Psoas muscle (tissue), 8 donors: ENCODE measurements at regions of chr1 and their contacts with region 1.

Region 1: DNA sequence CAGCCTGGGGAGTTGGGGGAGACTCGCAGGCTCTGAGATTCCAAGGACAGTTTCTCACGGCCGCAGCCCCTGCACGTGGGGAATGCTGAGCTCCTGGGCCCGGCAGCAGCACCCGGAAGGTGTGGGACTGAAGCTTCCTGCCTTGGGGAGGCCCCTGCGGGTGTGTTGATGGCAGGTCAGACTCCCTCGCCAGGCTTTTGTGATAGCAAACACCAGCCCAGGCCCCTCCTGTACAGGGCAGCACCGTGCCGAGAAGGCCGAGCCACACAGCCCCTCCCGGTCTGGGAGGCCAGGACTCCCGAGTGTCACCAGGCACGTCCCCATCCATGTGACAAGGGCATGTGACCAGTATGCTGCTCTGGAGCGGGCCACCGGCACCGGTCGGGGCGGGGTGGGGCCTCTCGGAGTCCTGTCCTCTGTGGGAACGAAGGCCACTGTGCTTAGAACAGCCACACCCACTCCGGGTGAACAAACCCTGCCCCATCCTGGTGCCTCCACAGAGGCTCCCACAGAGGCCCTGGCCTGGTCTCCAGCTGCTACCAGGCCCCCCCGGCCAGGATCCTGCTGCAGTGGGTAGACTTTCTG is 31.1 kb upstream of the ARHGEF16 start:
- DNase-seq: peak; percentile 33 to 64
- ATAC-seq: peak; percentile 38 to 62 (median 51)
- H3K4me3 ChIP-seq: no peak overlapping the region
- H3K27ac ChIP-seq: peak overlapping the region; percentile 55
- H3K4me1 ChIP-seq: no peaks in the 10 kb centered on the region
- H3K27me3 ChIP-seq: peaks cover 0 to 18% (median 4%) of the 10 kb centered on the region in 3 donors
- CTCF ChIP-seq: no peak

Region 2: DNA sequence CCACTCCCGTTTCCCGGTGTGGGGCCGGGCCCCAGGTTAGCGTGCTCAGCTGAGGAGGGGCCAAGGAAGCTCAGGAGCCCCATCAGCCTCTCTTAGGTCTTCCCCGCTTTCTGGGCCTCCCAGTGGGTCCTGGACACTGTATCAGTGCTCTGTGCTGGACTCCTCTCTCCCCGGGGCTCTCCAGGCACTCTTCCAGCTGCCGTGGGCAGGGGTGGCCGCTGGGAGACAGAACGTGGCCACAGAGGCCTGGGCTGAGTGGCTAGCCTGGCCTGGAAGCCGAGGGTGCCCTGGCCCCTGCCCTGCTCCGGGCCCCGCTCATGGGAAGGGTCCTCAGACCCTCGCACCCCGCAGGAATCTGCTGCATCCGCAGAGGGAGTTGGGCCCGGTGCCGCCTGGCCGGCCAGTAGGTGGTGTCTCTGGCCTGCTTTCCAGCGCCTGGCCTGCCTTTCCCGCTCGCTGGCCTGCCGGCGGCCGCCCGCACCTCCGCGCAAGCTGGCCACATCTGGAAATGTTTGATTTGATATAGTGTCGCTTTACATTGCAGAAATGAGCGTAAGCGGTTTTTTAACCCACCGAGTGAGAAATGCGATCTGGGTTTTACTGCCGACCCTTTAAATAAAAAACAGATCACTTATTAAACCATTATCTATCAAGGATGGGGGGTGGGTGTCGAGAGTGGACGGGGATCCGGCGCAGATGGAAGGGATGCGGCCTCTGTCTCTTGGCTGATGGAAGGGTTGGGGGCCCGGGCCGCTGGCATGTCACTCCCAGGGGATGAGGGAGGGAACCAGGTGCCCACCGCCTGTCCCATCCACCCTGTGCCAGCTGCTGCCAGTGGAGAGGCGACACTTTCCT is 547.4 kb before region 1 on chr1:
- intact Hi-C with region 1: loop called in 1 of 2 experiments (anchors 10 kb)
- DNase-seq: no peak
- ATAC-seq: no peak
- H3K4me3 ChIP-seq: no peak overlapping the region
- H3K27ac ChIP-seq: no peak overlapping the region
- H3K4me1 ChIP-seq: no peaks in the 10 kb centered on the region
- H3K27me3 ChIP-seq: peaks cover 0 to 68% (median 27%) of the 10 kb centered on the region in 3 donors
- CTCF ChIP-seq: peak; percentile 36

Region 3: GRCh38 chr1:3012456-3013291 is 410.7 kb before region 1 on chr1:
- intact Hi-C with region 1: loop called (anchors 1 to 2 kb)
- DNase-seq: peak; percentile 57 to 73
- ATAC-seq: peak; percentile 69 to 86 (median 75)
- H3K4me3 ChIP-seq: no peak overlapping the region
- H3K27ac ChIP-seq: no peak overlapping the region
- H3K4me1 ChIP-seq: no peaks in the 10 kb centered on the region
- H3K27me3 ChIP-seq: peaks cover 0 to 77% (median 5%) of the 10 kb centered on the region in 3 donors
- CTCF ChIP-seq: peak; percentile 86

Region 4: DNA sequence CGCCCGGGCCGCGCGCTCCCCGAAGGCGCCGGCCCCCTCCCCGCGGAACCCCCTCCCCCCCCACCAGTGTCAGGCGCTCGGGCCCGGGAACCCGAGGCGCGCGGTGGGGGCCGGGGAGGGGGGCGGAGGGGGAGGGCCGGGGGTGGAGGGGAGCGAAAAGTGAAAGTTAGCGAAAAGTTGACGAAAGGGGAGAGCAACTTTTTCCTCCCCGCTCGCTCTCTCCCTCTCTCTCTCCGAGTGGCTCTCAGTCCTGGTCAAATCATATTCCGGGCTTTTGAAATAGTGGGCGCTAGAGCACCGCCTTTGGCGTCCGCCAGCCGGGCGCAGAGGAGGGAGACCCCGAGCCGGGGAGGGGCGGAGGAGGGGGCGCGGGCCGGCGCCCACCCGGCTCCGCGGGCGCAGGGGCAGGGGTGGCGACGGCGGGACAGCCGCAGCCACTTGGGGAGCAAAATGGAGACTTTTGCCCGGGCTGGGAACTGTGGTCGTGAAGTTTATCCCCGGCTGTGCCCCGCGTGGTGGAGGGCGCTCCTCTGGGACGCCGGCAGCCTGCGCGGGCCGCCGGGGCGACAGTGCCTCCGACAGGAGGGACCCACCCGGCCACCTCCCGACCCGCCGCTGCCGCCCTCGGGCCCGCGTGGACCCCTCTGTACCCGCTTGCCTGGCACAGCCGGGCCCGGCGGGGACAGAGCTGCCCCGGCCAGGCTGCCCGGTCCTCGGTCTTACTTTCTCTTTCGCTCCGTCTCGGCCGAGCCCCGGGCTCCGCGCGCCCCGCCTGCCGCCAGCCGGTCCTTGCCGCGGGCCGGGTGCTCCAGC is 353.6 kb before region 1 on chr1:
- intact Hi-C with region 1: loop called in 1 of 2 experiments (anchors 5 kb)
- DNase-seq: peak; percentile 17 to 52
- ATAC-seq: peak in 3 of 4 donors; percentile 54 to 79 (median 67)
- H3K4me3 ChIP-seq: peak overlapping the region; percentile 78
- H3K27ac ChIP-seq: no peak overlapping the region
- H3K4me1 ChIP-seq: peaks cover 2% of the 10 kb centered on the region
- H3K27me3 ChIP-seq: peaks cover 0 to 87% (median 20%) of the 10 kb centered on the region in 3 donors
- CTCF ChIP-seq: peak; percentile 27

Region 5: DNA sequence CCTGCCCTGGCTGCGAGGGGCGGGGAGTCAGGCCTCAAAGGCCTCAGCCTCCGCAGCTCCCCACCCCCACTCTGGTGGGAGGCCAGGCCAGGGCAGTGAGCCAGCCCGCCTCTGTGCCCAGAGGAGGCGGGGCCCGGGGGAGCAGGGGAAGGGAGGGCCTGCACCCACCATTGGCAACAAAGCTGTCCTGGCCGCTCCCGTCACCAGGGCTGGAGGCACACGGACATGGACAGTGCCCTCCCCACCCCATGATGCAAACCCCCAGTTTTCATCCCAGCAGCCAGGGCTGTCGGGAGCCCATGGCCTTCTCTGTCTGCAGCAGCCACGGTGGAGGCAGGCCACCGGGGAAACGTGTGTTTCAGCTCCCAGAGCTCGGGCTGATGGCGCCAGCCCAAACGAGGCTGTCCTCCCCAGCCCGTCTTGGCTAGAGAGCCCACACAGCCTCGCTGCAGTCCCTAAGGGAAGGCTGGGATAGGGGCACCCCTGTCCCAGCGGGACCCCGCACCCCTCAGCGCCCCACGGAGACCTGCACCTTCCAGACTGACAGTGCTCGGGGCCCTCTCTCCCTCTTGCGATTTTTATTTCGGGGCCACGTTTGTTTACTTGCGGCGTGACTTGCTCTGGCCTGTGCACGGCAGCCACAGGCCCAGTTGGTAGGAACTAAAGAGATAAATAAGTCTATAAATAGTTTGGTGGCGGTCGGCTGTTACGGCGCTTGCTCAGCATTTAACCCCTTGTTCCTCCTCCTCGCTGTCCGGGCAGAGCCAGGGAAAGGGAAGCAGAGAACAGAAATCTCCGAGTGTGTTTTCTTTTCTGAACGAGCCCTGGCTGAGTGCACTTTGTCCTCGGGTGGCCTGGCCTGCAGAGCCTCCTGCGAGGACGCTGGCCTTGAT is 252.5 kb before region 1 on chr1:
- intact Hi-C with region 1: no loop called
- DNase-seq: peak; percentile 56 to 86
- ATAC-seq: peak; percentile 75 to 88 (median 86)
- H3K4me3 ChIP-seq: peak overlapping the region; percentile 59
- H3K27ac ChIP-seq: peak overlapping the region; percentile 88
- H3K4me1 ChIP-seq: peaks cover 27% of the 10 kb centered on the region
- H3K27me3 ChIP-seq: no peaks in the 10 kb centered on the region
- CTCF ChIP-seq: no peak

Region 6: GRCh38 chr1:3213725-3214124 is 209.6 kb before region 1 on chr1:
- intact Hi-C with region 1: no loop called
- DNase-seq: no peak
- ATAC-seq: no peak
- H3K4me3 ChIP-seq: no peak overlapping the region
- H3K27ac ChIP-seq: no peak overlapping the region
- H3K4me1 ChIP-seq: peaks cover 1% of the 10 kb centered on the region
- H3K27me3 ChIP-seq: peaks cover 0 to 25% (median 0%) of the 10 kb centered on the region in 3 donors
- CTCF ChIP-seq: no peak

Region 7: DNA sequence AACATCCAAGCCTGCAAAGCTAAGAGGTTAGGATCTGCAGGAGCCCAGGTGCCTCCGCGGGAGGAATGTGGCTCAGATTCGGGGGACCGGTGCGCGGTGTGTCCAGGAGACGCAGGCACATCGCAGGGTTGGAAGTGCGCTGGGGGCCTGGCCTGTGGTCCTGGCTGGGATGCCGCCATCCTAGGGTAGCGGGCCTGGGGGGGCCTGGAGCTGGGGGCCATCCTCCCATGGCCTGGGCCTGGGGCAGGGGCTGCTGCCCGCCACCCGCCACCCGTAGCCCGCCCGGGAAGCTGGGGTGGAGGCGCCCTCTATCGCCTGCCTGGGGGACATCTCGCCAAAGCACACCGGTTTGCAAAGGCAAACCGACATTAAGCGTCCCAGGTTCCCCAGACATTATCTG is 139.5 kb before region 1 on chr1:
- intact Hi-C with region 1: loop called in 1 of 2 experiments (anchors 10 kb)
- DNase-seq: no peak
- ATAC-seq: peak; percentile 46 to 74 (median 60)
- H3K4me3 ChIP-seq: no peak overlapping the region
- H3K27ac ChIP-seq: no peak overlapping the region
- H3K4me1 ChIP-seq: no peaks in the 10 kb centered on the region
- H3K27me3 ChIP-seq: peaks cover 0 to 38% (median 2%) of the 10 kb centered on the region in 3 donors
- CTCF ChIP-seq: peak; percentile 70

Region 8: DNA sequence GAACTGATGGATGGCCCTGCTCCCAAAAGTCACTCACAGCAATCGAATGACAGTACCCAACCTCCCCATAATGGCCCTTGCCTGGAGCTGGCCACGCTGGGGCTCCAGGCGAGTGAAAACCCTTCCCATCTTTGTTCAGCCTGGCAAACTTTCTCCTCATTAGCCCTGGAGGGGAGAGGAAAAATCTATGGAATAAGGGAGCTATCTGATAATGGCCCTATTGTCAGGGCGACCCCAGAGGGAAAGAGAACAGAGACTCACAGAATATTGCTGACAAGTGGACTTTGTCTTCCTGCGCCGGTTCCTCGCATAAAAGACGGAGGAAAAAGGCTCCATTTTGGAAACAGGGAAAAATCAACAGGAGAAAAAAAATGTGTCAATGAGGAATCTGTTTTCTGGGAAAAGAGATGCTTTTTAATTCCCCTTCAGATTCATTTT is 18.1 kb after region 1 on chr1:
- intact Hi-C with region 1: no loop called
- DNase-seq: peak in 1 of 2 donors; percentile 12
- ATAC-seq: no peak
- H3K4me3 ChIP-seq: no peak overlapping the region
- H3K27ac ChIP-seq: no peak overlapping the region
- H3K4me1 ChIP-seq: no peaks in the 10 kb centered on the region
- H3K27me3 ChIP-seq: peaks cover 0 to 49% (median 4%) of the 10 kb centered on the region in 3 donors
- CTCF ChIP-seq: no peak

Region 9: DNA sequence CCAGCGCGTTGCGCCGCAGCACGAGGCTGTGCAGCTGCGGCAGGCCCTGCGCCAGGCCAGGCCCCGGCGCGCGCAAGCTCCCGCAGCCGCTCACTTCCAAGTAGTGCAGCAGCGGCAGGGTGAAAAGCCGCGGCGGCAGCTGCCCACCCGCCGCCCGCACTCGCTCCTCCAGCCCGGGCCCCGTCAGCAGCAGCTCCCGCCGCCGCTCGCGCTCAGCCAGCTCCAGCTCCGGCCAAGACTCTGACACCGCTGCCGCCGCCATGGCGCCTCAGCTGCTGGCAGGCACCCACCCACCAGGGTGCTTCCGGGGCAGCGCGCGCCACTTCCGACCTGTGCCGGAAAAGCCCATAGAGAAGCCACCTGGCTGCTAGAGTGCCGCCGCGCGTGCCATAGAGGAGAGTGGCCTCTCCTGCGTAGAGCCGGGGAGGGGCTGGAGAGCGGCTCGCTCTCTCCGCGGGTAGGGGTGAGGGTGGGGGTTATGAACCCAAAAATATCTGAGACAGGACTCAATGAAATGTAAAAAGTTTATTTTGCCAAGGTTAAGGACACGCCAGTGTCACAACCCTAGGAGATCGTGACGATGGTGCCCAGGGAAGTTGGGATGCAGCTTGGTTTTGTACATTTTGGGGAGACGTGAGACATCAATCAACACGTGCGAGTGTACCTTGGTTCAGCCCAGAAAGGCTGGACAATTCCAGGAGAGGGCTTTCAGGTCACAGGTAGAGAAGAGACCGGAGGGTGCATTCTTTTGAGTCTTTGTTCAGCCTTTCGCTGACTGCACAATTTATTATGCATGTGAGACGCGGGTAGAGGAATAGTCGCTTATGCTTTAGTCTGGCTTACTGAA is 373.1 kb after region 1 on chr1 and contains the start of gene LRRC47:
- intact Hi-C with region 1: no loop called
- DNase-seq: peak; percentile 96 to 98
- ATAC-seq: peak; percentile 99 to 100 (median 99)
- H3K4me3 ChIP-seq: peak within 1 kb of the TSS; percentile 94
- H3K27ac ChIP-seq: peak within 1 kb of the TSS; percentile 79
- H3K4me1 ChIP-seq: peaks cover 36% of the 10 kb centered on the region
- H3K27me3 ChIP-seq: no peaks in the 10 kb centered on the region
- CTCF ChIP-seq: no peak
- total RNA-seq, gene LRRC47: 93.9 to 126 (median 97.3) TPM